Natural killer cell (primary cell): ENCODE measurements at regions of chr15 and their contacts with region 1.

Region 1: DNA sequence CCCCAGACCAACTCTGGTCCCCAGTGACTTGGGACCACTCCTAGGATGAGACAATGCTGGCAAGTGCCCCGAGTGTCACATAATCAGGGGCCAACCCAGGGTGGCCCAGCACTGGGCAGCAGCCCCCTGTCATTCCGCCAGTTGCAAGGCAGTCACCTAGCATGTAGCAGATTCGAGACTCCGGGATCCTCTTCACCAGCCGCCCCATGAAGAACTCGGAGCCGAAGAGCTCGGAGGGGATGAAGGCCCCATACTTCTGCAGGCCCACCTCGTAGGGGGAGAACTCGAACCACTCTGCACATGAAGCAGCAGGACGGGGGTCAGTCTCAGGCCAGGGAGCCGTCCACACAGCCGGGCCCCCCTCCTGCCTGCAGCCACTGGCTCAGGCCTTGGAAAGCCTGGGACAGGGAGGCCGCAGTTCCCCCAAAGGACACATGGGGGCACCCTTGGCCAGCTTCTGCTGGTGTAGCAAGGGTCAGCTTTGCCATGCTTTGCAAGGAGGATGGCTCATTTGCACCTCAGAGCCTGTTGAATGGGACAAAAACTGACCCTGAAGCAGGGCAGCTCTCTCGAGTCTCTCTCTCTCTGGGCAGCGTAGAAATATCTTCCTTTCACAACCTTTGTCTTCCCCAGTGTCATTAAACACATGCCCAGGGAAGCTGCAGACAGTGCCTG is 17.0 kb upstream of the EHD4 start:
- DNase-seq: peak; percentile 76 to 84
- ATAC-seq: peak; percentile 87 to 99 (median 98)
- H3K4me3 ChIP-seq: no peak overlapping the region
- H3K4me3 Mint-ChIP-seq: no peak overlapping the region
- H3K27ac ChIP-seq: no peak overlapping the region
- H3K27ac Mint-ChIP-seq: no peak overlapping the region
- H3K4me1 ChIP-seq: no peaks in the 10 kb centered on the region
- H3K4me1 Mint-ChIP-seq: no peaks in the 10 kb centered on the region
- H3K27me3 ChIP-seq: no peaks in the 10 kb centered on the region
- H3K27me3 Mint-ChIP-seq: peaks cover 0 to 5% of the 10 kb centered on the region in 2 donors
- CTCF ChIP-seq: peak; percentile 87

Region 2: DNA sequence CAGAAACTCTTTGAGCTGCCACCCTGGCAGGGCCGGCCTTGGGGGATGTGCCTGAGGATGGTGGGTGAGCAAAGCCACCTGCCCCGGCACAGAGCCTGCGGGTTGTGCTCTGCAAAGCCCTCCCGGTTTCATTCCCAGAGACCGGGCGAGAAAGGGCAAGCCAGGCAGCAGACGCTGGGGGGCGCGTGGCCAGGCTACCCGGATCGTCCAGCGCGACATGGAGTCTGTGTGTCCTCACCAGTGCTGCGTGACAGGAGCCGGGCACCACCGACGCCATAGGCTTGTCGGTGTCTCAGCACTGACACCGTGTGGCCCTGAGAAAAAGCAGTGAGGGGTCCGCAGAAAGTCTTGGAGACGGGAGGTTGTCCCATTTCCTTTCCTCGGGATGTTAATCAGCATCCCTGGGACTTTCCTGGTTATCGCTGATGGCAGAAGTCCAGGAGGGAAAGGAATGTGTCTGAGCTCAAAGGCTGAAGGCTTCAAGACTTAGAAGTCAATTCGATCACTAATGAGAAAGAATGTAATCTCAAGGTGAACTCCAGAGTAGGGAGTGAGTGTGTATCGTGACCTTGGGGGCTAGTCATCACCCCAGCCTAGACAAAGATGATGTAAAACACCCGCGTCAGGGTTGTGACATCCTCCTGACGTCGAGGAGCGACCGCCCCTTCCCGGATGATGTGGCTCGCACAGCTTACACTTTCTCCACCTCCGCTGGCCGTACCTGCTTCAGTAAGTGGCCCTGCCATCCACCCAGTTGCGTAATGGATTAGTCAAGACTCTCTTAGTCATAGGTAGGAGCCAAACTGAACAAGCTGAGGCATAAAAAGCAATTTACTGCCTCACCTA is 67.8 kb after region 1 on chr15:
- intact Hi-C with region 1: loop called (anchors 1 kb)
- DNase-seq: peak; percentile 35 to 69
- ATAC-seq: peak; percentile 80
- H3K4me3 ChIP-seq: no peak overlapping the region
- H3K4me3 Mint-ChIP-seq: peak overlapping the region; percentile 13
- H3K27ac ChIP-seq: no peak overlapping the region
- H3K27ac Mint-ChIP-seq: peak overlapping the region; percentile 31 to 60
- H3K4me1 ChIP-seq: peaks cover 14% of the 10 kb centered on the region
- H3K4me1 Mint-ChIP-seq: peaks cover 6 to 11% of the 10 kb centered on the region in 2 donors
- H3K27me3 ChIP-seq: peaks cover 17% of the 10 kb centered on the region
- H3K27me3 Mint-ChIP-seq: peaks cover 25 to 58% of the 10 kb centered on the region in 2 donors
- CTCF ChIP-seq: peak; percentile 34

Region 3: DNA sequence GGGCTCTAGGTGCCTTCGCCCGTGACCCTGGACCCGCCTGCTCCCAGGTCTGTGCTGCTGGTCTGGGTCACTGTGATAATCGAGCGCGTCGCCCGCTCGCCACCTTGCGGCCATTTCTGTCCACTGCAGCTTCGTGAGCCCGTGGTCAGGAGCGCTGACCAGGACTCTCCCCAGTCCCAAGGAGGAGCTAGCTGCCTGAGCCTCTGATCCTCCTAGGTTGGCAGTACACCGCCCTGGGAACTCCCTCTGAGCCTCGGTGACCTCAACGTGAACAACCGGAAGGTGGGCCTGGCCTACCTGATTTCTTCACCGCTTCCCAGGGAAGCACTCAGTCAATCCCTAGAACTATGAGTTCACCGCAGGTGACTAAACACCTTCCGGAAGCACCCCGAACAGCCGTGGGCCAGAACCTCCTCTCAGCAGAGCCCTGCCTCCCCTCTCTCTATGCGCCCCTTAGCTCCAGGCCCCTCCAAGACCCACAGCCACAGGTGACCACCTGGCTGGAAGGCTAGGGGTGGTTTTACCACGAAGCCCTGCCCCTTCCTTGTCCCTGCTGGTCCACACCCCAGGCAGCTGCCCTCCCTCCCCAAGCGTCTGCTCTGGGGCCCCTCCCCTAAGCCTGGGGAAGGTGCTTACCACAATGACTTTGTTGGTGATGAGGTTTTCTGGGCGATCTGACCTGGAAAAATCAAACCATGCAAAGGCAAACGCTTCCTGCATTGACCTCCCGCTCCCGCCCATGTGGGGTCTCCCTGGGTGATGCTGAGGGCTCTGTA is 95.3 kb after region 1 on chr15:
- intact Hi-C with region 1: loop called (anchors 1 kb)
- DNase-seq: peak; percentile 42 to 68
- ATAC-seq: peak; percentile 67 to 86 (median 79)
- H3K4me3 ChIP-seq: no peak overlapping the region
- H3K4me3 Mint-ChIP-seq: peak overlapping the region; percentile 9
- H3K27ac ChIP-seq: no peak overlapping the region
- H3K27ac Mint-ChIP-seq: no peak overlapping the region
- H3K4me1 ChIP-seq: peaks cover 14% of the 10 kb centered on the region
- H3K4me1 Mint-ChIP-seq: peaks cover 7 to 9% of the 10 kb centered on the region in 2 donors
- H3K27me3 ChIP-seq: peaks cover 10% of the 10 kb centered on the region
- H3K27me3 Mint-ChIP-seq: peaks cover 9 to 15% of the 10 kb centered on the region in 2 donors
- CTCF ChIP-seq: peak; percentile 83

Region 4: GRCh38 chr15:42137431-42138261 is 148.2 kb after region 1 on chr15:
- intact Hi-C with region 1: loop called (anchors 5 kb)
- DNase-seq: peak in 1 of 2 donors; percentile 55
- ATAC-seq: no peak
- H3K4me3 ChIP-seq: no peak overlapping the region
- H3K4me3 Mint-ChIP-seq: no peak overlapping the region
- H3K27ac ChIP-seq: no peak overlapping the region
- H3K27ac Mint-ChIP-seq: no peak overlapping the region
- H3K4me1 ChIP-seq: no peaks in the 10 kb centered on the region
- H3K4me1 Mint-ChIP-seq: no peaks in the 10 kb centered on the region
- H3K27me3 ChIP-seq: no peaks in the 10 kb centered on the region
- H3K27me3 Mint-ChIP-seq: peaks cover 0 to 4% of the 10 kb centered on the region in 2 donors
- CTCF ChIP-seq: peak; percentile 37